Sigmoid colon (tissue), 7 donors: ENCODE measurements at regions of chr2 and their contacts with region 1.

Region 1: GRCh38 chr2:164841719-164842623 is at the start of gene COBLL1:
- DNase-seq: peak; percentile 86
- H3K4me3 ChIP-seq: peak within 1 kb of the TSS; percentile 69 to 79 (median 75)
- H3K27ac ChIP-seq: peak within 1 kb of the TSS; percentile 92 to 98 (median 95)
- H3K4me1 ChIP-seq: peaks cover 0 to 36% (median 12%) of the 10 kb centered on the region in 4 donors
- H3K27me3 ChIP-seq: no peaks in the 10 kb centered on the region
- CTCF ChIP-seq: peak; percentile 68 to 89 (median 86)
- EP300 ChIP-seq: no peak
- POLR2A ChIP-seq: no peak
- total RNA-seq, gene COBLL1: 17.6 to 22.4 (median 20.5) TPM

Region 2: DNA sequence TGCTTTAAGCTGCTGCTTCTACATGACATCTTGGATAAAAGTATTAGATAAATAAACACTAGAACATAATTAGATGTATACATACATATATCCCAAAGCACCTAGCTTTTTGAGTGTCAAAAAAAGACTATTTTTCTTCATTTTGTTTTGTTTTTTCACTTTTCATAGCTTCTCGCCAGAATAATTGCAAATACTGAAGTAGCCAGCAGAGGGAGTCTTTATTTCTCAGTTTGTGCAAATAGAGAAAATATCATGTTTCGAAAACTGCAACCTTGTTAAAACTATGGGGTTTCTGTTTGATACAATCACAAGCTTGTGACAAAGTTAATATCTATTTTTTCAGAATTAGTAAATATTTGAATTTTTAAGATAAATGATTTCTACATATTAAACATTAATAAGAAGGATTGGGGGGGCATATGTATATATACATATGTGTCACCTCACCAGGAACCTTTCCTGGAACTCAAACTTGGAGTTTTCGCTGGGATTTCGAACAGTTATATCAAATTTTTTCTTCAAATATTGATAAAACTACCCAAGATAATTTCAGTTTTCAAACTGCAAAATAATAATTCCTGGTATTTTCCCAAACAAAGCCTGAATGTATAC is 281.7 kb before region 1 on chr2:
- intact Hi-C with region 1: loop called (anchors 10 kb)
- DNase-seq: no peak
- H3K4me3 ChIP-seq: peak overlapping the region in 1 of 4 donors; percentile 9
- H3K27ac ChIP-seq: peak overlapping the region in 1 of 4 donors; percentile 70
- H3K4me1 ChIP-seq: peaks cover 0 to 24% (median 18%) of the 10 kb centered on the region in 4 donors
- H3K27me3 ChIP-seq: no peaks in the 10 kb centered on the region
- CTCF ChIP-seq: peak; percentile 17 to 72 (median 58)
- EP300 ChIP-seq: no peak
- POLR2A ChIP-seq: no peak

Region 3: GRCh38 chr2:164737612-164738081 is 104.3 kb before region 1 on chr2:
- intact Hi-C with region 1: loop called (anchors 1 kb)
- DNase-seq: peak; percentile 79
- H3K4me3 ChIP-seq: no peak overlapping the region
- H3K27ac ChIP-seq: no peak overlapping the region
- H3K4me1 ChIP-seq: peaks cover 0 to 23% (median 12%) of the 10 kb centered on the region in 4 donors
- H3K27me3 ChIP-seq: no peaks in the 10 kb centered on the region
- CTCF ChIP-seq: peak; percentile 39 to 71 (median 70)
- EP300 ChIP-seq: no peak
- POLR2A ChIP-seq: no peak

Region 4: GRCh38 chr2:164757924-164758695 is 83.9 kb before region 1 on chr2:
- intact Hi-C with region 1: no loop called
- DNase-seq: no peak
- H3K4me3 ChIP-seq: no peak overlapping the region
- H3K27ac ChIP-seq: no peak overlapping the region
- H3K4me1 ChIP-seq: peaks cover 0 to 7% (median 7%) of the 10 kb centered on the region in 4 donors
- H3K27me3 ChIP-seq: no peaks in the 10 kb centered on the region
- CTCF ChIP-seq: no peak
- EP300 ChIP-seq: no peak
- POLR2A ChIP-seq: no peak

Region 5: DNA sequence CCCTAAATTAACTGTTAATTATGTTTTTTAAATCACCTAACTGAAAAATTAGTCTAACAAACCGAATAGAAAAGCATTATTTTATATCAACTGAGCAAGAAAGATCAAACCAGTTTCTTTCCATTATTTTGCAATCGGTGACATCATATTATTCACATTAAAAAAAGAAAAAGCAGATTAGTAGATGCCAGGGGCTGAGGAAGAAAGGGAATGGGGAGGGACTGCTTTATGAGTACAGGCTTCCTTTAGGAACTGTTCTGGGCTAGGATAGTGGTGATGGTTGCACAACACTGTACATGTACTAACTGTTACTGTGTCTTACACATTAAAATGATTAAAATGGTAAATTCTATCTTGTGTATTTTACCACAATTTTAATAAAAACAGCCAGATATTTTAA is 59.6 kb before region 1 on chr2:
- intact Hi-C with region 1: loop called (anchors 5 kb)
- DNase-seq: no peak
- H3K4me3 ChIP-seq: no peak overlapping the region
- H3K27ac ChIP-seq: peak overlapping the region in 3 of 4 donors; percentile 17 to 87 (median 84)
- H3K4me1 ChIP-seq: peaks cover 0 to 54% (median 34%) of the 10 kb centered on the region in 4 donors
- H3K27me3 ChIP-seq: no peaks in the 10 kb centered on the region
- CTCF ChIP-seq: no peak
- EP300 ChIP-seq: no peak
- POLR2A ChIP-seq: no peak

Region 6: GRCh38 chr2:164896634-164897355 is 54.8 kb after region 1 on chr2:
- intact Hi-C with region 1: no loop called
- DNase-seq: no peak
- H3K4me3 ChIP-seq: no peak overlapping the region
- H3K27ac ChIP-seq: no peak overlapping the region
- H3K4me1 ChIP-seq: no peaks in the 10 kb centered on the region
- H3K27me3 ChIP-seq: no peaks in the 10 kb centered on the region
- CTCF ChIP-seq: no peak
- EP300 ChIP-seq: no peak
- POLR2A ChIP-seq: no peak

Region 7: DNA sequence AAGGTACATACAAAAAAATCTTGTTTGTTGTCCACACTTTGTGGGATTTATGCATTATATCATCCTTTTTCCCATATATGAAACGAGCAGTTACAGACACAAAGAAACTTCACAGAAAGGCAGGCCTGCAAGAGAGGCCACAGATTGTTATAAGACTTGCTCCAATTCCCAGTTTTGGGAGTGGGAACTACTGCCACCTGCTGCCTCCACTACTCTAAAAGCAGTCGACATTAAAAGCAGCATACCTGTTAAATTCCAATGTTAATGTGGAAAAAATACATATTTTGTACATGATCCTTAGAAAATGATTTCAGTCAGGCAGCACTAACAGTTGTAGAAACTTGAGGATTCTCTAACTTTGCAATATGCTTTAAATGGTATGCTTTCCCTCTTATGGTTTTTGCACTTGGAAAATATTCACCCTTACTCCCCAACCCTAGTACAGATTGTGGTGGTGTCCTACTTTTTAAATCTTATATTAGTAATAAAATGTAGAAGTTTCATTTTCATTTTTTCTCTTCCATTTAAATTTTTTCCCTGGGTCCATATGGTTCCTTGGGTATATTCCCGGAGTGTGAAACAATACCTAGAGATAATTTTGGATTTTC is 75.4 kb after region 1 on chr2:
- intact Hi-C with region 1: loop called (anchors 5 kb)
- DNase-seq: peak; percentile 67
- H3K4me3 ChIP-seq: no peak overlapping the region
- H3K27ac ChIP-seq: peak overlapping the region in 1 of 4 donors; percentile 38
- H3K4me1 ChIP-seq: peaks cover 0 to 4% (median 0%) of the 10 kb centered on the region in 4 donors
- H3K27me3 ChIP-seq: no peaks in the 10 kb centered on the region
- CTCF ChIP-seq: peak in 3 of 4 experiments; percentile 29 to 54 (median 47)
- EP300 ChIP-seq: no peak
- POLR2A ChIP-seq: no peak